Right ventricle myocardium superior (tissue), 1 donor: ENCODE measurements at regions of chr19 and their contacts with region 1.

Region 1: DNA sequence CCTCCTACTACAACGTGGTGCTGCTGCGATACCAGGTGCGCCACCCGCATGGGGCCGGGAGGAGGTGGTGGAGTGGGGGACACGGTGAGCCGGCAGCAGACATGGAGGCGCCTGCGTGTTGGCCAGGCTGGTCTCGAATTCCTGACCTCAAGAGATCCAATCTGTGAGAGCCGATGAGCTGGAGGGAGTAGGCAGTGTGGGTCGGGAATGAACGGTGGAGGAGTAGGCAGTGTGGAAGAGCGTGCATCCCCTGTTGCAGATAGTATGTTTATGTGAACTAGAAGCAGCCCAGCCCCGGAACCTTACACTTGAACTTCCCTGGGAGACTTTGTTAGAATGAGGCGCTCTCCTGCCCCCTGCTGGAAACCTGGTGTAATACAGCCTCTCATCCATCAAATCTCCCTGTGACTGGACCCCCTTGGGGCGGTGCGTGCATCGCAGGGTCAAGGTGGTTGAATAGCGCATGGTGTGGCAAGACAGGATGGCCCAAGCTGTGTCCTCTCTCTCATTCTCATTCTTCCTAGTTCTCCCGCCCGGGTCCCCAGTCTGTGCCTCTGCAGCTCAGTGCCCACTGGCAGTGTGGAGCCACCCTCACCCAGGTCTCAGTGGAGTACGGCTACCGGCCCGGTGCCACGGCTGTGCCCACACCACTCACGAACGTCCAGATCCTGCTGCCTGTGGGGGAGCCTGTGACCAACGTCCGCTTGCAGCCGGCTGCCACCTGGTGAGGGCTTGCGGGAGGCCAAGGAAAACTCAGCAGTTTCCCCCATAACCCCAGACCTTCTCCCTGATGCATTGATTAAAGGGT is 10.5 kb upstream of the B3GNT3 start:
- DNase-seq: peak; percentile 74
- ATAC-seq: peak; percentile 63

Region 2: DNA sequence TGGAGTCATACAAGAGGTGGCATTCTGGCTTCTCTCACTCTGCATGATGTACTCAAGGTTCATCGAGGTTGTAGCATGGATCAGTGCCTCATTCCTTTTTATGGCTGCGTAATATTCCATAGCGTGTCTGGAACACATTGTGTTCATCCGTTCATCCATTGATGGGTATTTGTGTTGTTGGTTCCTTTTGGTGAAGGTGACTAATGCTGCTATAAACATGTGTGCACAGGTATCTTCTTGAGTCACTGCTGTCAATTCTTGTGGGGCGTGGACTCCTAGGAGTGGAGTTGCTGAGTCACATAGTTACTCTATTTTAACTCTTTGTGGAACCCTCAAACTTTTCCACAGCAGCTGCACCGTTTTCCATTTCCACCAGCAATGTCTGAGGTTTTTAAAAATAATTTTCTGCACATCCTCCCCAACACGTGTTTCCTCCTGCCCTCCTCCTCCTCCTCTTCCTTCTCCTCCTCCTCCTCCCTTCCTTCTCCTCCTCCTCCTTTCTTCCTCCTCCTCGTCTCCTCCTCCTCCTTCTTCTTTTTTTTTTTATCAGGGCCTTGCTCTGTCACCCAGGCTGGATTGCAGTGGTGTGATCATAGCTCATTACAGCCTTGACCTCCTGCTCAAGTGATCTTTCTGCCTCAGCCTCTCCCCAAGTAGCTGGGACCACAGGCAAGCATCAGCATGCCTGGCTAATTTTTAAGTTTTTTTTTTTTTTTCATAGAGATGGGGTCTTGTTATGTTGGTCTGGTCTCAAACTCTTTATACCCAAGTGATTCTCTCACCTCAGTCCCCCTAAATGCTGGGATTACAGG is 333.9 kb before region 1 on chr19:
- intact Hi-C with region 1: loop called (anchors 10 kb)
- DNase-seq: no peak
- ATAC-seq: no peak

Region 3: DNA sequence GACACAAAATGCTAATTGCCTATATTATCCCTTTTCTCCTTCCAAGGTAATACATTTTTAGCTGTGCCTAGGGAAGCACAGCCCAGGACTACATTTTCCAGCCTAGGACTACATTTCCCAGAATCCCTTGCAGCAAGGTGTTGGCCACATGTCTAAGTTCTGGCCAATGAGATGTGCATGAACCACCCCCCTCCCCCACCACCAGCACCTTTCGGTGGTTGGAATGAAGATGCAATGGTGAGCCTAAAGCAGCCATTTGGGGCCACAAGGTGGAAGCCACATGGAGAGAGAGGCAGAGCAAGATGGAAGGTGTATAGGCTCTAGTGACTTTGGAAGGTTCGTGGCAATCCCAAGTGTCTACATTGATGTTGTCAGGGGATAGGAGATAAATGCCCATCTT is 112.5 kb before region 1 on chr19:
- intact Hi-C with region 1: no loop called
- DNase-seq: peak; percentile 4
- ATAC-seq: no peak

Region 4: DNA sequence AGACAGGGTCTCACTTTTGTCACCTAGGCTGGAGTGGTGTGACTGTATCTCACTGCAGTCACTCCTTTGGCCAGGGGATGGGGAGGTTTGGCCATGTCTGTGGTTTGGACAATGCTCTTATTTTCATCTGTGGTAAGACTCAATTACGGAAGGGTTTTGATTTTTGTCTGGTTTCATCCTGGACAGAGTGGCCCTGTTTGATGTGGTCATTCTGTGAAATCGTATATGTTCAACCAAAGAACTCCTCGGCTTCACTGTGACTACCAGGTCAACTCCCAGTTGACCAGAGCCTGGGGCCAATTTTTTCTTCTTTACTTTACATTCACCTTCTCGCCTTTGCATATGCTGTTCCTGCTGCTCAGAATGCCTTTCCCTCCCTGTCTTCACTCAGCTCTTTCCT is 141.6 kb after region 1 on chr19:
- intact Hi-C with region 1: no loop called
- DNase-seq: no peak
- ATAC-seq: no peak